ENCODE measurements at regions of chr12 and their contacts with region 1.

Region 1: GRCh38 chr12:95700316-95700785 is 90.2 kb downstream of the NTN4 start:
- DNase-seq: no peak
- ATAC-seq: peak; percentile 37
- H3K4me3 Mint-ChIP-seq: no peak overlapping the region
- H3K27ac Mint-ChIP-seq: no peak overlapping the region
- H3K4me1 Mint-ChIP-seq: peaks cover 12% of the 10 kb centered on the region
- H3K27me3 Mint-ChIP-seq: peaks cover 17% of the 10 kb centered on the region
- CTCF ChIP-seq: no peak

Region 2: DNA sequence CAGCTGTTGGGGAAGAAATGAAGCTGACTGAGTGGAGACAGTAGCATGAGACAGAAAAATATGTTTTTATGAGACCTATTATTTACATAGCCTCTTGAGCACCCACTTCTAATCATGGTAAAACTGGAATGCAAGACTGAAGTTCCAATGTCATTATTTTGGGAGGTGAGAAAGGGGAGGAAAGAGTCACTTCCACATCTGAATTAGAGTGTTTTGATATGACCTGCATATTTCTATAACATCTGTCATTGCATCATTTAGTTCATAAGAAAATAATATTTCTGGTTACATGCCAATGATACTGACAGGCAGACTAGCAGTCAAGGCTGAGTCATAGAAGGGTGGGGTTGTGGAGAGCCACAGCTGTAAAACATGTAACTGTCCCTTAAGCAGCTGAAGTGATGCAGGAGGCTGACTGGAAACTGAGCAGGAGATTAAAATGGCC is 63.5 kb after region 1 on chr12:
- CTCF ChIA-PET with region 1: no interaction called
- POLR2A ChIA-PET with region 1: no interaction called
- intact Hi-C with region 1: loop called (anchors 5 kb)
- DNase-seq: no peak
- ATAC-seq: no peak
- H3K4me3 Mint-ChIP-seq: no peak overlapping the region
- H3K27ac Mint-ChIP-seq: no peak overlapping the region
- H3K4me1 Mint-ChIP-seq: peaks cover 13% of the 10 kb centered on the region
- H3K27me3 Mint-ChIP-seq: peaks cover 7% of the 10 kb centered on the region
- CTCF ChIP-seq: no peak